ENCODE measurements at regions of chr17 and their contacts with region 1.

Region 1: GRCh38 chr17:7329374-7329996 is 350 bp upstream of the NEURL4 start:
- DNase-seq: peak; percentile 98 to 99
- H3K4me3 ChIP-seq: peak overlapping the region; percentile 89 to 97
- H3K27ac ChIP-seq: peak overlapping the region; percentile 89 to 92
- H3K4me1 ChIP-seq: peaks cover 0 to 12% of the 10 kb centered on the region in 2 donors
- H3K27me3 ChIP-seq: no peaks in the 10 kb centered on the region
- CTCF ChIP-seq: no peak

Region 2: DNA sequence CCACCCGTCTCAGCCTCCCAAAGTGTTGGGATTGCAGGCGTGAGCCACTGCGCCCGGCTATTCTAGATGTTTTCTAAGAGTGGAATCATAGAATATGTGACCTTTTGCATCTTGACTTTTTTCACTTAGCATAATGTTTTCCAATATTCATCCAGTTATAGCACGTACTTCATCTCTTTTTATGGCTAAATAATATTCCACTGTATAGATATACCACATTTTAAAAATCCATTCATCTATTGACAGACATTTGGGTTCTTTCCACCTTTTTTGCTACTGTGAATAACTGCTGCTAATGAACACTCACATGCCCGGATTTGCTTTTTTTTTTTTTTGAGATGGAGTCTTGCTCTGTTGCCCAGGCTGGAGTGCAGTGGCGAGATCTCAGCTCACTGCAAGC is 25.3 kb before region 1 on chr17:
- intact Hi-C with region 1: no loop called
- DNase-seq: no peak
- H3K4me3 ChIP-seq: no peak overlapping the region
- H3K27ac ChIP-seq: no peak overlapping the region
- H3K4me1 ChIP-seq: peaks cover 0 to 9% of the 10 kb centered on the region in 2 donors
- H3K27me3 ChIP-seq: no peaks in the 10 kb centered on the region
- CTCF ChIP-seq: no peak

Region 3: GRCh38 chr17:7314719-7315569 is 14.5 kb before region 1 on chr17 and contains the start of gene GPS2:
- intact Hi-C with region 1: loop called (anchors 1 kb)
- DNase-seq: peak; percentile 61 to 96
- H3K4me3 ChIP-seq: peak within 1 kb of the TSS; percentile 81 to 88
- H3K27ac ChIP-seq: peak within 1 kb of the TSS; percentile 93 to 95
- H3K4me1 ChIP-seq: peaks cover 10 to 33% of the 10 kb centered on the region in 2 donors
- H3K27me3 ChIP-seq: no peaks in the 10 kb centered on the region
- CTCF ChIP-seq: no peak
- total RNA-seq, gene GPS2: 52.4 TPM

Region 4: GRCh38 chr17:7394452-7395191 is 65.1 kb after region 1 on chr17 and contains the start of gene PLSCR3:
- intact Hi-C with region 1: loop called (anchors 2 kb)
- DNase-seq: peak; percentile 56 to 90
- H3K4me3 ChIP-seq: peak within 1 kb of the TSS; percentile 78 to 85
- H3K27ac ChIP-seq: peak within 1 kb of the TSS; percentile 87 to 91
- H3K4me1 ChIP-seq: peaks cover 5 to 14% of the 10 kb centered on the region in 2 donors
- H3K27me3 ChIP-seq: no peaks in the 10 kb centered on the region
- CTCF ChIP-seq: peak; percentile 23 to 33 (median 25)
- total RNA-seq, gene PLSCR3: 297 TPM

Region 5: GRCh38 chr17:7403977-7404736 is 74.7 kb after region 1 on chr17 and contains the start of gene TMEM256:
- intact Hi-C with region 1: loop called (anchors 1 kb)
- DNase-seq: peak; percentile 97 to 100
- H3K4me3 ChIP-seq: peak within 1 kb of the TSS; percentile 69 to 85
- H3K27ac ChIP-seq: peak within 1 kb of the TSS; percentile 89 to 92
- H3K4me1 ChIP-seq: peaks cover 0 to 22% of the 10 kb centered on the region in 2 donors
- H3K27me3 ChIP-seq: no peaks in the 10 kb centered on the region
- CTCF ChIP-seq: peak in 2 of 3 experiments; percentile 5 to 25
- total RNA-seq, gene TMEM256: 241 TPM

Region 6: GRCh38 chr17:7632492-7632894 is 303.0 kb after region 1 on chr17:
- intact Hi-C with region 1: no loop called
- DNase-seq: no peak
- H3K4me3 ChIP-seq: no peak overlapping the region
- H3K27ac ChIP-seq: no peak overlapping the region
- H3K4me1 ChIP-seq: no peaks in the 10 kb centered on the region
- H3K27me3 ChIP-seq: no peaks in the 10 kb centered on the region
- CTCF ChIP-seq: peak in 1 of 3 experiments; percentile 21